GM10248 (cell line): ENCODE measurements at regions of chr18 and their contacts with region 1.

Region 1: DNA sequence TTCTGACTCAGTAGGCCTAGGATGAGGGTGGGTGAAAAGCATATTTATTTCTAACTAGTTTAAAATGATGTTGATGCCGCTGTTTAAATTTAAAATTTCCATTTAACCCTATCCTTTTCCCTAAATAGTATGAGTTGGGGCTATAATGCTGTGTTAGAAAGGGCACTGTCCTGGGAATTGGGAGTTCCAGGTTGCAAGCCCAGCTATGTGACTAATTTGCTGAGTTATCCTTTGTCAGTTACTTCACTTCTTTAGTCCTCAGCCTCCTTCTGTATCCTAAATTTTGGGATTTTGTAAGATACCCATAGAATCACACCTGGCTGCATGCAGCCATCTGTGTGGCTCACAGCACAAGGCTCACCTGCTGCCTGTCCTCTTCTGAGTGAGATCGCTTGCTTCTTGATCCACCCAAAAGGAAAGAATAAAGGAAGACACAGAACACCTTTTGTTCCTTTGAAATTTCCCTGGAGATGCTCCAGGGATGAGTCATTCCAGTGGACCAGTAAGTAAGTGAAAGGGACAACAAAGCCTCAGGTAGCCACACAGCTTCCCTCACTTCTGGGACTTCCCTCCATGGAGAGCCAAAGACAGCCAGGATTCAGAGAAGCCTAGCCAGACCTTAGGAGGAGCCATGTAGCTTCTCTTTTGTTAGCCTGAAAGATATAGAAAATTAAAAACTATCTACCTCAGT is 97.2 kb downstream of the DTNA start:
- DNase-seq: no peak
- CTCF ChIP-seq: no peak

Region 2: GRCh38 chr18:34787931-34788532 is 19.2 kb before region 1 on chr18:
- CTCF ChIA-PET with region 1: interaction called, 13 read pairs
- POLR2A ChIA-PET with region 1: no interaction called
- DNase-seq: peak; percentile 45
- CTCF ChIP-seq: peak; percentile 80

Region 3: GRCh38 chr18:35040988-35041814 is 233.9 kb after region 1 on chr18 and contains the start of gene MAPRE2:
- CTCF ChIA-PET with region 1: no interaction called
- POLR2A ChIA-PET with region 1: no interaction called
- DNase-seq: peak; percentile 98
- CTCF ChIP-seq: no peak